Dorsolateral prefrontal cortex (tissue), 120 donors: ENCODE measurements at regions of chr10 and their contacts with region 1.

Region 1: DNA sequence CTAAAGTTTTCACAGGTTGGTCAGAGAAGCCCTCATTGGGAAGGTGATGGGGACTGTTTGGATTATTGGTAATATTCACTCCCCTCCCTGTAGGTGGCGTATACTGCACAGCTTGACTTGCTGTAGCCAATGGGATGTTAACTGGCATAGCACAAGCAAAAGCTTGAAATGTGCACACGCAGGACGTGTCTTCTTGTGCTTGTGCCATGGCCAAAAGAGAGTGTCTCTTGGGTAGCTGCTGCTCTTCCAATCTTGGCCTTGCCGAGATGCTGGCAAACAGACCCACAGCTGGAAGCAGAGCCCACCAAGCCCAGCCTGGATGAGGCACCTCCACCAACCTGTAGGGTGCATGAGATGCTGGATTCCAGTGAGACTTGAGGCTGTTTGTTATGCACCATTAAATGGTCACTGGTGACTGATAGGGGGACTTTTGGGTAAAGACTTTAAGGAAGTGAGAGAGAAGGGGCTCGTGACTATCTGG is 266.0 kb downstream of the GRID1 start:
- DNase-seq: no peak
- H3K4me3 ChIP-seq: no peak overlapping the region
- H3K27ac ChIP-seq: no peak overlapping the region
- H3K27me3 ChIP-seq: no peaks in the 10 kb centered on the region
- CTCF ChIP-seq: peak in 54 of 56 donors; percentile 17 to 65 (median 48)

Region 2: DNA sequence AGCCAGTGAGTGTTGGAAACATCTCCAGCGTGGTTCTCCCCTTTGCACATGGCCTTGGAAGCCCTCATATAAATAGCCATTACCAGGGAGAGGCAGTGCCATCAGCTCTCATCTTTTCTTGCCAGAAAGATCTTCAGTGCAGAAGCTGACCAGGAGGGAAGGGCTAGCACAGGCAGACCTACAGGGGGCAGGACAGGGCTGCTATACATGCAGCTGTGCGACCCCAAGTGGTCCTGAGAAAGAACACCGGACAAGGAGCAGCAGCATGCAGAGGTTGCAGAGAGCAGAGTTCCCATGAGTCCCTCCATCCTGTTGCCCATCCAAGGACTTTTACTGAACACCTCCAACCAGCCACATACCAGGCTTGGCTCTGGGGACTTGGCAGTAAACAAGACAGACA is 248.9 kb after region 1 on chr10:
- intact Hi-C with region 1: loop called in 1 of 2 experiments (anchors 10 kb)
- DNase-seq: peak in 2 of 10 donors; percentile 43 to 47
- H3K4me3 ChIP-seq: no peak overlapping the region
- H3K27ac ChIP-seq: peak overlapping the region in 29 of 59 donors; percentile 3 to 98 (median 46)
- H3K27me3 ChIP-seq: no peaks in the 10 kb centered on the region
- CTCF ChIP-seq: peak in 34 of 56 donors; percentile 1 to 56 (median 29)

Region 3: DNA sequence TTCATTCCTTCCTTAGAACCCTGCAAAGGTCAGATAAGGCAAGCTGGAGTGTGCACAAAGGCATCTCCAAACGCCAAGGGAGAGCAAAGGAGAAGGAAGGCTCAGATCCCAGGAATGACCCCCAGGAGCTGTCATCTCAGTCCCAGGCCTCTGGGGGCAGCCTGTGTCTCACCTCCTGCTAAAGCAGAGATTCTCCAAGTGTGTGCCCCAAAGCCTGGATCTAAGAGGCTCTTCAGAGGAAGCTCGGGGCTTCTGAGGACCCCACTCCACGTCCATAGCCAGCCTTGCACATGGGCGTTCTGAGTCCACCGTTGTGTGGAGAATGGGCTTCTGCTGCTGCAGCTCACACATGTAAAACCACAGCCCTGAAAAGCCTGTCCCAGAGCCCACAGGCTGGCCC is 271.1 kb after region 1 on chr10:
- intact Hi-C with region 1: loop called in 1 of 2 experiments (anchors 5 kb)
- DNase-seq: peak in 5 of 10 donors; percentile 4 to 27 (median 16)
- H3K4me3 ChIP-seq: no peak overlapping the region
- H3K27ac ChIP-seq: no peak overlapping the region
- H3K27me3 ChIP-seq: no peaks in the 10 kb centered on the region
- CTCF ChIP-seq: no peak